ENCODE measurements at regions of chr6 and their contacts with region 1.

Region 1: GRCh38 chr6:43575772-43576551 is at the starts of genes POLH and XPO5:
- DNase-seq: peak; percentile 88 to 93
- ATAC-seq: peak; percentile 98 to 99 (median 99)
- H3K4me3 ChIP-seq: peak within 1 kb of the TSS; percentile 69 to 100 (median 92)
- H3K27ac ChIP-seq: peak within 1 kb of the TSS; percentile 4 to 91 (median 84)
- H3K4me1 ChIP-seq: peaks cover 4 to 46% (median 32%) of the 10 kb centered on the region in 9 donors
- H3K27me3 ChIP-seq: no peaks in the 10 kb centered on the region
- CTCF ChIP-seq: peak in 4 of 9 donors; percentile 26 to 49 (median 42)
- total RNA-seq, gene POLH: 5.5 to 11.2 (median 8.9) TPM
- total RNA-seq, gene XPO5: 11.7 to 20.1 (median 17.0) TPM

Region 2: DNA sequence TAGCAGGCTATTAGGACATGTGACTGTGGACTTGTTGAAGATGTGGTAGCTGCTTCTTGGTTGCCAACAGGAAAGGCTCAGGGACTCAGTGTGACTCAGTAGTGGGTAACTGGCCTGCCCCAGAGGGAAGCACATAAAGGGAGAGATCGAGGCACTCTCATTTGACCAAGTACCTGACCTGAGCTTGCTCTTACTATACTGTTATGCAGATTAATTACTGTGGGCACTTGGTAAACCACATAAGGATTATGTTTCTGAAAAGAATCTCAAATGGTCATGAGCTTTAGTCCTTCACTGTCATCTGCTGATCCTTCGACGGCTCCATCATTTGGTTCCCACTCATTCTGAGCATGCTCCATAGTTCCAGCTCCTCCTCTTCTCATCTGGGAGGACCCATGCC is 744.7 kb before region 1 on chr6:
- intact Hi-C with region 1: no loop called
- DNase-seq: no peak
- ATAC-seq: no peak
- H3K4me3 ChIP-seq: no peak overlapping the region
- H3K27ac ChIP-seq: no peak overlapping the region
- H3K4me1 ChIP-seq: no peaks in the 10 kb centered on the region
- H3K27me3 ChIP-seq: no peaks in the 10 kb centered on the region
- CTCF ChIP-seq: no peak

Region 3: DNA sequence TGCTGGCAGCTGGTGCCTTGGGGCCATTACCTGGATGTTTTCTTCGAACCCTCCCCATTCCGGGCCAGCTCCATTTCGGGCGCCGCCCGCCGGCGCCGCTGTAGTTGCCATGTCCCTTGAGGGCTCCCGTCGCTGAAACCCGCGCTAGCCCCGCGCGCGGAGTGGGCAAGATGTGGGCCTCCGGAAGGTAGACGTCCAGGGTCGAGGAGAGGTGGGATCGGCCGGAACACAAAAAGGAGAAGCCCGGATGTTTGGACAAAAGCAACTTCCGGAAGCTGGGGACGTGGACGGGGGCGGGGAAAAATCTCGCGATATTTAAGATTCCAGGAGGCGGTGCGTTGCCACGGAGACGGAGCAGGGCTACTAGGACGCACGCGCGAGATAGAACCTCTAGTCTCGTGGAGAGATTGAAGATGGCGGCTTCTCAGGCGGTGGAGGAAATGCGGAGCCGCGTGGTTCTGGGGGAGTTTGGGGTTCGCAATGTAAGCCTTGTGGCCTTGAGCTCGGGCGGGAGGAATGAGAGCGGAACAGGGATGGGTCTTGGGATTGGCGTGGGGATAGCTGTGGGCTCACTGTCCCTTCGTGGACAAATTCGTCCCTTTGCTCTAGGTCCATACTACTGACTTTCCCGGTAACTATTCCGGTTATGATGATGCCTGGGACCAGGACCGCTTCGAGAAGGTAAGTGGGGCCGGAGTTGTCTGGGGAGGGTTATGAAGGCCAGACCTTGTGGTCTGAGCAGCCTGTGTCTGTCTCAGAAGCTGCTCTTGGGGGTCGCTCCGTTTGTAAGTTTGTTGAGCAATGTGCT is 59.1 kb before region 1 on chr6 and contains the starts of genes POLR1C and YIPF3:
- intact Hi-C with region 1: loop called in 1 of 10 experiments (anchors 2 kb)
- DNase-seq: peak; percentile 93 to 99
- ATAC-seq: peak; percentile 87 to 98 (median 96)
- H3K4me3 ChIP-seq: peak within 1 kb of the TSS; percentile 68 to 98 (median 91)
- H3K27ac ChIP-seq: peak within 1 kb of the TSS; percentile 54 to 97 (median 90)
- H3K4me1 ChIP-seq: peaks cover 18 to 69% (median 60%) of the 10 kb centered on the region in 9 donors
- H3K27me3 ChIP-seq: no peaks in the 10 kb centered on the region
- CTCF ChIP-seq: no peak
- total RNA-seq, gene POLR1C: 10.3 to 21.9 (median 15.3) TPM
- total RNA-seq, gene YIPF3: 52.6 to 86.3 (median 69.0) TPM

Region 4: GRCh38 chr6:43629505-43630300 is 53.7 kb after region 1 on chr6:
- intact Hi-C with region 1: no loop called
- DNase-seq: peak; percentile 93 to 97
- ATAC-seq: peak; percentile 87 to 95 (median 91)
- H3K4me3 ChIP-seq: peak overlapping the region; percentile 63 to 98 (median 86)
- H3K27ac ChIP-seq: peak overlapping the region; percentile 94 to 99 (median 98)
- H3K4me1 ChIP-seq: peaks cover 10 to 39% (median 29%) of the 10 kb centered on the region in 9 donors
- H3K27me3 ChIP-seq: no peaks in the 10 kb centered on the region
- CTCF ChIP-seq: no peak

Region 5: DNA sequence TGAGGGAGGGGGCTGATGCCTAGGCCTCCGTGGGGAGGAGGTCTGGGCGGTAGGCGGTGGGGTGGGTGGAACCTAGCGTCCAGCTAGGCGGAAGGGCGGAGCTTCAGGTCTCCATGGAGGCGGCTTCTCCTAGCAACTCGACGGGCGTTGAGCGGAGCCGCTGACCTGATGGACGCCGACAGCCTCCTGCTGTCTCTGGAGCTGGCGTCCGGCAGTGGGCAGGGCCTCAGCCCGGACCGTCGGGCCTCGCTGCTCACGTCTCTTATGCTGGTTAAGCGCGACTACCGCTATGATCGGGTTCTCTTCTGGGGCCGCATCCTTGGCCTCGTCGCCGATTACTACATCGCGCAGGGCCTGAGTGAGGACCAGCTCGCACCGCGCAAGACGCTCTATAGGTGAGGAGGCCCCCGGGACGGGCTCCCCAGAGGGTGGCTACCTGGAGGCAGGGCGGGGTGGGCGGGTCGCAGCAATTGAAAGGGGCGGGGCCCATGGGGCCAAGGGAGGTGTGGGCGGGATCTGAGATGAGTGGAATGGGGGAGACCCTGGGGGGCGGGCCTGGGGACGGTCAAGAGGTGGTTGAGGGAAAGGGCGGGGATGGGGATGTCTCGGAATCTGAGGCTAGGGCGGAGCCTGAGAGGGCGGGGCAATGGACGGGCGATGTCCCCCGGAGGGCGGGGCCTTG is 69.1 kb after region 1 on chr6 and contains the start of gene RSPH9:
- intact Hi-C with region 1: no loop called
- DNase-seq: peak; percentile 61 to 72
- ATAC-seq: peak; percentile 65 to 91 (median 86)
- H3K4me3 ChIP-seq: peak within 1 kb of the TSS; percentile 21 to 59 (median 49)
- H3K27ac ChIP-seq: peak within 1 kb of the TSS in 4 of 10 donors; percentile 15 to 49 (median 30)
- H3K4me1 ChIP-seq: peaks cover 0 to 21% (median 13%) of the 10 kb centered on the region in 9 donors
- H3K27me3 ChIP-seq: no peaks in the 10 kb centered on the region
- CTCF ChIP-seq: no peak
- total RNA-seq, gene RSPH9: 0.09 to 0.15 (median 0.12) TPM in 5 of 10 donors, not detected in the others